GM12878 (cell line): ENCODE measurements at regions of chr20 and their contacts with region 1.

Region 1: DNA sequence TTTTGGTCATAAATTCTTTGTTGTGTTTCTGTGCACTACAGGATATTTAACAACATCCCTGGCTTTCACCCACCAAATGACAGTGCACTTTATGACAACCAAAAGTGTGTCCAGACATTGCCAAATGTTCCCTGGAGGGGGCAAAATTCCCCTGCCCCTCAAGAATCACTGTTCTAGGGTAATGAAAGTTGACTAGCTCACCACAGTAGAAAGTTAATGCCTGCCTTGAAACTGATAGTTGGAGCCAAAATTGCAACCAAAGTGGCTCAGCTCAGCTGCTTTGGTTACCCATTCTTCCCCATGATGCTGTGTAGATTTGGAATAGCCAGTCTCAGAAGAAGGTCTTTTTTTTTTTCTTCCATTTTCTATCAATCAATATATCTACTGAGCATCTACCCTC is 150.6 kb downstream of the RALGAPA2 start:
- DNase-seq: peak; percentile 33
- ATAC-seq: peak; percentile 91
- H3K4me3 ChIP-seq: no peak overlapping the region
- H3K27ac ChIP-seq: 0 out of 2 replicates have a peak overlapping the region, but pooled peaks have one; percentile 37
- H3K4me1 ChIP-seq: peaks cover 16% of the 10 kb centered on the region; the same call in 1 of the 2 replicates
- H3K27me3 ChIP-seq: no peaks in the 10 kb centered on the region
- CTCF ChIP-seq: no peak
- EP300 ChIP-seq: no peak
- POLR2A ChIP-seq: no peak
- RAD21 ChIP-seq: no peak

Region 2: DNA sequence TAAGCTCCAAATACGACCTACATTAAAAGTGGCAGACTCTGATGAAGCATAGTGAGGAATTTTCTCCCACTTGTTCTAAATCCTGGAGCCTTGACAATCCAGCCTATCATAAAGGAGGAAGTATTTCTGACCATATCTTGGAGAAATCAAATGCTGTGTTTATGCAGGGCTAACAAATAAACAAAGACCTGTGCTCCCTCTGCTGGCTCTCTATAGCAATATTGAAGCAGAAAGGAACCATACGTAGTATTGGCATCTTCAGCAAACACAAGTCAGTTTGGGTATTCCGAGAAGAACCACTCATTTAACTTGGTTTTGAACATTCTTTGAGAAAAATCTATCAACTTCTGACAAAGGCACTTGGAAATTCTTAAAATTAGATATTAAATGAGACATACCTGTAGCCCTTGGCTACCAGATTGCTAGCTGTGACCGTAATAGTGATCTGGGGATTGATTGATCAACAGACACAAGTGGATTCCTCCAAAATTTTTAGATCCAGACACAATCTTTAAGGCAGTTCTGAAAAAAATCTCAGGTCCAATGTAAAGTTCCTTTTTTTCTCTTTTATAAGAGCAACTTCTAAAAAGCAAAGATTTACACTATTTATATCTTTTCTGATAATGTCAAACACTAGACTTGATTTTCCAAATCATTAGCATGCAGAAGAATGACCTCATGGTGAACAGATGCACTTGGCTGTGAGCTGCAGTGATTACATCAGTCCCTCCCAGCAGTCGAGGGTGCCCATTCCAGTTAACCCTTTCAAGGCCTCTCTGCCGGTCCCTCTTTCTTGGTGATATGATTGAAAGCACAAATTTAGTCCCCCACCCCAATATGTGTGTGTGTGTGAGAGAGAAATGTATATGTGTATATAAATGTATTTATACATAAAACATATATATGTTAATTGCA is 153.7 kb before region 1 on chr20:
- CTCF ChIA-PET with region 1: no interaction called
- POLR2A ChIA-PET with region 1: no interaction called
- RAD21 ChIA-PET with region 1: no interaction called
- SMC1A ChIA-PET with region 1: no interaction called
- in situ Hi-C with region 1: no loop called
- intact Hi-C with region 1: no loop called
- DNase-seq: no peak
- ATAC-seq: no peak
- H3K4me3 ChIP-seq: no peak overlapping the region
- H3K27ac ChIP-seq: no peak overlapping the region
- H3K4me1 ChIP-seq: no peaks in the 10 kb centered on the region
- H3K27me3 ChIP-seq: no peaks in the 10 kb centered on the region
- CTCF ChIP-seq: peak in 1 of 3 experiments; percentile 3; a peak in 1 of 6 replicates
- EP300 ChIP-seq: no peak
- POLR2A ChIP-seq: no peak
- RAD21 ChIP-seq: no peak

Region 3: DNA sequence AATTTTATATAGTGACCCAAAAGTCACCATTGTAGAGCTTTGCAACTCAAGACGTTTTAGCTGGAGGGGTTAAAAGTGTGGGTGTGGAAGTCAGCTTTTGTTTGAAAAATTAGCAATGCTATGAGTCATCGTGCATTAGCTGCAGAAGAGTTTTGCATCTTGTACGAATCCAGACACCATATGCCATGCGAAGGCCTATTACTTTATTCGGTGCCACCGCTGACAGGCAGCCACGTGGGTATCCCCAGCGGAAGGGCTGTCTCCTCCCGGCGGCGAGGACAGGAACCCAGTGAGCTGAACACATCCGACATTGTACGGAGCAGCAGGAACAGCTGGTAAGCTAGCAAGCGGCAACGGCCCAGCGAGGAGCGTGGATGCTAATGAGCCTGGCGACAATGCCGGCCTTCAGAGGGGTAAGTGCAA is 109.6 kb before region 1 on chr20:
- CTCF ChIA-PET with region 1: interaction called, 9 read pairs
- POLR2A ChIA-PET with region 1: interaction called, 3 read pairs
- RAD21 ChIA-PET with region 1: interaction called, 19 read pairs
- SMC1A ChIA-PET with region 1: interaction called, 47 read pairs
- in situ Hi-C with region 1: no loop called
- intact Hi-C with region 1: loop called (anchors 10 kb)
- DNase-seq: peak; percentile 63
- ATAC-seq: peak; percentile 95
- H3K4me3 ChIP-seq: peak overlapping the region; percentile 54; the same call in 1 of the 2 replicates
- H3K27ac ChIP-seq: peak overlapping the region; percentile 73
- H3K4me1 ChIP-seq: peaks cover 25% of the 10 kb centered on the region
- H3K27me3 ChIP-seq: no peaks in the 10 kb centered on the region
- CTCF ChIP-seq: peak in 1 of 3 experiments; percentile 4; a peak in 1 of 6 replicates
- EP300 ChIP-seq: 0 out of 4 replicates have a peak, but pooled peaks of 1 of the 2 experiments have one; percentile 12
- POLR2A ChIP-seq: peak; percentile 72
- RAD21 ChIP-seq: 0 out of 2 replicates have a peak, but pooled peaks have one; percentile 2

Region 4: DNA sequence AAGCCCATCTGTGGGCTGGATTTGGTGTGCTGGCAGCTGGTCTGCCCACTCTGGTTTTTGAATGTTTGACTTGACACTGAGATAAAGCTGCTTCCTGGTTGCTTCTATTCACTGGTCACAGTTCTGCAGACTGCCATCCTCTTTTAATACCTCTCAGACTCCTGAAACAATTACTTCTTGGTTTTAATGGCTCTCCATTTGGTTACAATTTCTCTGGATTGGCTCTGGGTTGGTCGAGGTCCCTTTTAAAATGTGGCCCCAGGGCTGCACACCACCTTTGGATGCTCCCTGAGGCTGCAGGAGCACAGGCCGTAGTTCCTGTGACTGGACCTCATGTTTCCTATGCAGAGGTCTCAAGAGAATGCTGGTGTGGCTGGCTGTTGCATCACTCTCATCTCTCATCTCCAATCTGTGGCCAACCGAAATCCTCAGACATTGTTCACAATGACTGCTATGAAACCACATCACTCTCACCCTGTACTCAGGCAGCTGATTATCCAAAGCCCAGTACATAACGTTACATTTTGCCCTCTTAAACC is 95.4 kb before region 1 on chr20:
- CTCF ChIA-PET with region 1: interaction called, 11 read pairs
- POLR2A ChIA-PET with region 1: no interaction called
- RAD21 ChIA-PET with region 1: interaction called, 8 read pairs
- SMC1A ChIA-PET with region 1: interaction called, 25 read pairs
- in situ Hi-C with region 1: no loop called
- intact Hi-C with region 1: loop called (anchors 5 kb)
- DNase-seq: peak; percentile 92
- ATAC-seq: peak; percentile 87
- H3K4me3 ChIP-seq: no peak overlapping the region
- H3K27ac ChIP-seq: peak overlapping the region; percentile 86
- H3K4me1 ChIP-seq: peaks cover 36% of the 10 kb centered on the region
- H3K27me3 ChIP-seq: no peaks in the 10 kb centered on the region
- CTCF ChIP-seq: no peak
- EP300 ChIP-seq: peak; percentile 77; a peak in 3 of 4 replicates
- POLR2A ChIP-seq: peak; percentile 61
- RAD21 ChIP-seq: no peak

Region 5: DNA sequence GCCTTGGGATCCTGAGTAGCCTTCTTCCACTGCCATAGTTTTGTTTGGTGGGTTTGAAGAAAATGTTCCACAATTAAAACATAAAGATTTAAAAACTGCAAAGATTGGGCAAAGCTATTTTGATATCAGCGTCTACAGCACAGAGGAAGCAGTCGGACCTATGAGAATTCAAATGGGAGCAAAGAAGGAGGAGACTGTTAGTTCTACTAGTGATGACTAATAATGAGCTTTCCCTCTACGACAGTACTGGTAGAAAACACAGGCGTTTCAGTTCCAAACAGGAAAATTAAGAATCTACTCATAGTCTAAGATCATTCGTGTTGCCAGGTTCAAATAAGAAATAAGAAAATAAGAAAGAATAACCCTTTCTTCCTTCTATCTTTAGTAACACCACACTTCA is 72.8 kb before region 1 on chr20:
- CTCF ChIA-PET with region 1: interaction called, 4 read pairs
- POLR2A ChIA-PET with region 1: no interaction called
- RAD21 ChIA-PET with region 1: interaction called, 4 read pairs
- SMC1A ChIA-PET with region 1: interaction called, 13 read pairs
- in situ Hi-C with region 1: no loop called
- intact Hi-C with region 1: no loop called
- DNase-seq: peak; percentile 66
- ATAC-seq: peak; percentile 96
- H3K4me3 ChIP-seq: no peak overlapping the region
- H3K27ac ChIP-seq: peak overlapping the region; percentile 73
- H3K4me1 ChIP-seq: peaks cover 32% of the 10 kb centered on the region
- H3K27me3 ChIP-seq: no peaks in the 10 kb centered on the region
- CTCF ChIP-seq: no peak
- EP300 ChIP-seq: peak; percentile 74 to 82; a peak in 3 of 4 replicates
- POLR2A ChIP-seq: no peak
- RAD21 ChIP-seq: no peak

Region 6: DNA sequence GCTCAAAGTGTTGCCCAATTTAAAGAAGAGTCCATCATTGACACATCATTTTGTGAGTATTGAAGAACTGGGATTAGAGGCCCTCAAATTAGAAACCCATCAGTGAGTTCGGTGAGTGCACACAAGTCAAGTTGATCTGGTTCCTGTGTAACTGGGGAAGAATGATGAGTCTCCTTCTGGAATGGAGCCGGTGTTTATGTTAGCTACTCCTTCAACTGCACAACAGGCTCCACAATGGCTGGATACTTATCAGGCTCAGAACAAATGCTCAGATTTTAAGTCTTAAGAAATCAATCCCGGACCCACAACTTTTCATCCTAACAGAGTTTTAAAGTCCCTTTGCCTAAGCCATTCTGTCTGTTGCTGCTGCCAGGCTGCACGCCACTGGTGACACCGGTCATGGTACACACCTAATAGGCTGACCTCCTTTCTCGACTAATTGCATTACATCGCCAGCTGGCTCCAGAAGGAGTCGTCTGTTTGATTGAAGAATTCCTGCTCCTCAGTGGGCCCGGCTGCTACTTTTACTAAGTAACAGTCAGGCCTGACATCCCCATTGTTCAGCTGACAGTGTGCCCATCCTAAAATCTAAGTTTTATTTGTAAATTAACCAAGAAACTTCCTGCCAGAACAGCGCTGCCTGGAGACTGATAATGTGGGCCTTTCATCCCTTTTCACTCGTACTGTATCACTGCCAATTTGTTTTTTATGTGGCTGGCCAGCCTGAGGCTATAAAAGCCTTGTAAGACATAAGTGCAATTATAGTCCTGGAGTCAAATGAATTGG is 63.6 kb before region 1 on chr20:
- CTCF ChIA-PET with region 1: interaction called, 4 read pairs
- POLR2A ChIA-PET with region 1: no interaction called
- RAD21 ChIA-PET with region 1: interaction called, 4 read pairs
- SMC1A ChIA-PET with region 1: interaction called, 16 read pairs
- in situ Hi-C with region 1: no loop called
- intact Hi-C with region 1: no loop called
- DNase-seq: no peak
- ATAC-seq: no peak
- H3K4me3 ChIP-seq: no peak overlapping the region
- H3K27ac ChIP-seq: no peak overlapping the region
- H3K4me1 ChIP-seq: peaks cover 20% of the 10 kb centered on the region
- H3K27me3 ChIP-seq: no peaks in the 10 kb centered on the region
- CTCF ChIP-seq: no peak
- EP300 ChIP-seq: no peak
- POLR2A ChIP-seq: no peak
- RAD21 ChIP-seq: no peak

Region 7: GRCh38 chr20:20549718-20550117 is 12.1 kb before region 1 on chr20:
- CTCF ChIA-PET with region 1: interaction called, 6 read pairs
- POLR2A ChIA-PET with region 1: interaction called, 5 read pairs
- RAD21 ChIA-PET with region 1: interaction called, 3 read pairs
- SMC1A ChIA-PET with region 1: interaction called, 14 read pairs
- in situ Hi-C with region 1: no loop called
- intact Hi-C with region 1: no loop called
- DNase-seq: no peak
- ATAC-seq: no peak
- H3K4me3 ChIP-seq: no peak overlapping the region
- H3K27ac ChIP-seq: no peak overlapping the region
- H3K4me1 ChIP-seq: peaks cover 4% of the 10 kb centered on the region
- H3K27me3 ChIP-seq: no peaks in the 10 kb centered on the region
- CTCF ChIP-seq: no peak
- EP300 ChIP-seq: no peak
- POLR2A ChIP-seq: no peak
- RAD21 ChIP-seq: no peak

Region 8: GRCh38 chr20:20606050-20606449 is 44.2 kb after region 1 on chr20:
- CTCF ChIA-PET with region 1: no interaction called
- POLR2A ChIA-PET with region 1: no interaction called
- RAD21 ChIA-PET with region 1: no interaction called
- SMC1A ChIA-PET with region 1: no interaction called
- in situ Hi-C with region 1: no loop called
- intact Hi-C with region 1: no loop called
- DNase-seq: no peak
- ATAC-seq: no peak
- H3K4me3 ChIP-seq: no peak overlapping the region
- H3K27ac ChIP-seq: no peak overlapping the region
- H3K4me1 ChIP-seq: peaks cover 19% of the 10 kb centered on the region
- H3K27me3 ChIP-seq: no peaks in the 10 kb centered on the region
- CTCF ChIP-seq: no peak
- EP300 ChIP-seq: no peak
- POLR2A ChIP-seq: no peak
- RAD21 ChIP-seq: no peak

Region 9: DNA sequence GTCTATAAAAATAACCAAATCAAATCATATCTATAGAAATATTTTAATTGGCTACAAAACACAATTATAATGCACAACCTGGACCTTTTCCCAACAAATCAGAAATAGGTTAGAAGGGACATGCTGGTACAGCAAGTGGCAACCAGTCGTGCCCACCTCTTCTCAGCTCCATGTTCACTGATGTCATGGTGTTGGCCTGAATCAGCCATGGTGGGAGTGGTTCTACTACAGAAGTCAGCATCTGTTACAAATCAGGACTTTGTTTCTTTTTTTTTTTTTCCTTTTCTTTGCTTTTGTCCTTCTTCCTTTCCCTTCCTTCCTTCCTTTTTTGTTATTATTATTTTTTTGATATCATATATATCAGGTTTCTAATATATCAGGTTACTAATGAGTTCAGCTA is 59.4 kb after region 1 on chr20:
- CTCF ChIA-PET with region 1: no interaction called
- POLR2A ChIA-PET with region 1: no interaction called
- RAD21 ChIA-PET with region 1: no interaction called
- SMC1A ChIA-PET with region 1: no interaction called
- in situ Hi-C with region 1: no loop called
- intact Hi-C with region 1: no loop called
- DNase-seq: no peak
- ATAC-seq: no peak
- H3K4me3 ChIP-seq: no peak overlapping the region
- H3K27ac ChIP-seq: no peak overlapping the region
- H3K4me1 ChIP-seq: no peaks in the 10 kb centered on the region
- H3K27me3 ChIP-seq: no peaks in the 10 kb centered on the region
- CTCF ChIP-seq: no peak
- EP300 ChIP-seq: no peak
- POLR2A ChIP-seq: no peak
- RAD21 ChIP-seq: no peak